Vagina (tissue), 2 donors: ENCODE measurements at regions of chr12 and their contacts with region 1.

Region 1: GRCh38 chr12:48851883-48852733 is at the start of gene DDX23:
- DNase-seq: peak; percentile 96 to 97
- H3K4me3 ChIP-seq: peak within 1 kb of the TSS; percentile 75 to 81
- H3K27ac ChIP-seq: peak within 1 kb of the TSS; percentile 72
- H3K4me1 ChIP-seq: peaks cover 27% of the 10 kb centered on the region
- H3K27me3 ChIP-seq: no peaks in the 10 kb centered on the region
- CTCF ChIP-seq: no peak
- POLR2A ChIP-seq: no peak
- total RNA-seq, gene DDX23: 57.9 TPM

Region 2: DNA sequence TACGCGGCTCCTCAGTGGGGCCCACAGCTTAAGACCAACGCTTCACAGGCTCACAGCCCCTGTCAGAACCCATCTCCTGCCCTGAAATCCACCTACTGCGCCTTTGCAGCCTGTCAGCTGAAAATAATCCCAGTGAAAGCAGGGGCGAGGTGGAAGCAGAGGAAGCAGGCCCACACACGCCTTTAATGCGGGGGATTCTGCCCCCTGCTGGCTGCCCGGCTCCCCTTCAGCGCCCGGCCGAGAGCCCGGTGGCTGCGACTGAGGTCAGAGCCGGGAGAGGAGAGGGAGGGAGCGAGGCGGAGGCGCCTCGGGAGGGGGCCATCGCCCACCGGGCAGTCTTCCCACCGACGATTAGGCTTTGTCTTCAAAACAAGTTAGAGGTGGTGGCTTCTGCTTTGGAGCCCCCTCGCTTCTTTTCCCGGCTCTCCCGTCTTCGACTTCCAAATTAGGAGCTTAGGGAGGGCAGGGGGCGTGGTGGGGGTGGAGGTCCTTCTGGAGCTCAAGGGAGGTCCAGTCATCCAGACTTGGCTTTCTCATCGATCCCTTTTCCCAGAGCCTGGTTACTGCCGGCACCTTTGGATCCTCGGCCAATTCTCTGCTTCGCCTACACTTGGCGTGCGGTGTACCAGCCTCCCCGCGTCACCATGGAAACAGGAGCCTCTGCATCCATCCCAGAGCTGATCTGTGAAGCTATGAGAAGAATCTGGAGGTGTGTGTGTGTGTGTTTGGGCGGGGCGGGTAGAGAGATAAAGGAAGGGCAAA is 38.7 kb after region 1 on chr12:
- intact Hi-C with region 1: loop called (anchors 2 kb)
- DNase-seq: no peak
- H3K4me3 ChIP-seq: peak overlapping the region; percentile 27 to 33
- H3K27ac ChIP-seq: peak overlapping the region; percentile 0
- H3K4me1 ChIP-seq: peaks cover 11% of the 10 kb centered on the region
- H3K27me3 ChIP-seq: no peaks in the 10 kb centered on the region
- CTCF ChIP-seq: peak; percentile 77 to 89 (median 86)
- POLR2A ChIP-seq: no peak

Region 3: DNA sequence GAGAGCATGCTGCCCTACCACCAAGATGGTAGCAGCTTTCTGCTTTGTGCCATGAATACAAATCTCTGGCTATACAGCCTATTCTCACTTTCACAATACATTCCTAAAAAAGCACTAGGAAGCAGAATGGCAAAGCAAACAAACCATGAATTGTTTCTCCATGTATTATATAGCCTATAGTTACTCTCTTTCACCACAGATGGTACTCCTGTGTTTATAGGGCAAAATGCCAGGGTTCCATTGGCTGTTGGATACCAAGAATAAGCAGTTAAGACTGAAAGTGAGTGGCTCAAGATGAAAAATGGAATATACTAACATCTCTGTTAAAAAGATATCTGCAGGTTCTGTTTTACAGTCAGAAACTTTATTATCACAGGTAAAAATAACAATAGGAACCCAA is 94.1 kb after region 1 on chr12:
- intact Hi-C with region 1: loop called (anchors 10 kb)
- DNase-seq: no peak
- H3K4me3 ChIP-seq: no peak overlapping the region
- H3K27ac ChIP-seq: no peak overlapping the region
- H3K4me1 ChIP-seq: peaks cover 39% of the 10 kb centered on the region
- H3K27me3 ChIP-seq: no peaks in the 10 kb centered on the region
- CTCF ChIP-seq: no peak
- POLR2A ChIP-seq: no peak

Region 4: DNA sequence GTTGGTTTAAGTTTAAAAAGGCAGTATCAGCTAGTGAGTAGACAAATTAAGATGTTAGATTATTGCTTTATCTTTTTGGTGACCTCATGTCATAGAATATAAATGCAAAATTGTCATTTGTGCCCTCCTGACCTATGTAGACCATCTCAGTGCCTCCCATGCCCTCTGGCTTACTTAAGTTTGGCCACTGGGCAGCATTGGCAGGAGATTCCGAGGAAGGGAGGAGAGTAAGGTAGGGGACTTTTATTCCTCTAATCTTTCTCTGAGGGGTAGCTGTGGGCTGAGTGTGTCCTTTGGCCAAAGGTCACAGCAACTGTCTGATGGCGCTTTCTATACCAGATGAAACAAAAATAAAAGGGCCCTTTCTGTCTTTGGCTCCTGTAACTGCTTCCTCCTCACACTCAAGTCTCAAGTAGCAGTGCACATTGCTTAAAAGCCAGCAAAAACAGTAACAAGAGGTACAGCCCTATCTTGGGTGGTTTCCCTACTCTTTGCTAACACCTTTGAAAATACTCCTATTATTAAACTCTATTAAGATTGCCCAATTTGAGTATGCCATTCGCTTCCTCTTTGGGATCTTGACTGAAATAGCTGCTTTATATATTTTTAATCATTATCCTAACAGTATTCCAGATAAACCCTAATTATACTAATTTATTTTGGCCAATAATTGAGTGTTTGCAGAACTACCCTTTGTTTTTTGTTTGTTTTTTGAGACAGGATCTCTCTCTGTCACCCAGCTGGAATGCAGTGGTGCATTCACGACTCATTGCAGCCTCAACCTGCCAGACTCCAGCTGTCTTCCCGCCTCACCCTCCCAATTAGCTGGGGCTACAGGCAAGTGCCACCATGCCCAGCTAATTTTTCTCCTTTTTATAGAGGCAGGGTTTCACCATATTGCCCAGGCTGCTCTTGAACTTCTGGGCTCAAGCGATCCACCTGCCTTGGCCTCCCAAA is 630.3 kb after region 1 on chr12:
- intact Hi-C with region 1: no loop called
- DNase-seq: no peak
- H3K4me3 ChIP-seq: no peak overlapping the region
- H3K27ac ChIP-seq: no peak overlapping the region
- H3K4me1 ChIP-seq: peaks cover 7% of the 10 kb centered on the region
- H3K27me3 ChIP-seq: no peaks in the 10 kb centered on the region
- CTCF ChIP-seq: no peak
- POLR2A ChIP-seq: no peak